PC-9 (cell line): ENCODE measurements at regions of chr3 and their contacts with region 1.

Region 1: GRCh38 chr3:46110701-46111493 is 83.6 kb upstream of the XCR1 start:
- DNase-seq: peak; percentile 72 to 98
- H3K4me3 ChIP-seq: peak overlapping the region; percentile 41; the same call in 1 of the 2 replicates
- H3K27ac ChIP-seq: peak overlapping the region; percentile 98
- H3K4me1 ChIP-seq: peaks cover 76% of the 10 kb centered on the region
- H3K27me3 ChIP-seq: no peaks in the 10 kb centered on the region
- CTCF ChIP-seq: no peak

Region 2: GRCh38 chr3:45841757-45842491 is 269.0 kb before region 1 on chr3 and contains the start of gene LZTFL1:
- CTCF ChIA-PET with region 1: no interaction called
- POLR2A ChIA-PET with region 1: no interaction called
- intact Hi-C with region 1: no loop called
- DNase-seq: peak; percentile 87 to 92
- H3K4me3 ChIP-seq: peak within 1 kb of the TSS; percentile 93
- H3K27ac ChIP-seq: peak within 1 kb of the TSS; percentile 36
- H3K4me1 ChIP-seq: peaks cover 8% of the 10 kb centered on the region; the same call in 1 of the 2 replicates
- H3K27me3 ChIP-seq: no peaks in the 10 kb centered on the region; the same call in 1 of the 2 replicates
- CTCF ChIP-seq: no peak
- total RNA-seq, gene LZTFL1: 21.2 and 39.2 TPM in 2 replicates

Region 3: GRCh38 chr3:46127501-46127900 is 16.6 kb after region 1 on chr3:
- CTCF ChIA-PET with region 1: no interaction called
- POLR2A ChIA-PET with region 1: no interaction called
- intact Hi-C with region 1: loop called (anchors 1 kb)
- DNase-seq: peak; percentile 57 to 88
- H3K4me3 ChIP-seq: no peak overlapping the region
- H3K27ac ChIP-seq: peak overlapping the region; percentile 62
- H3K4me1 ChIP-seq: peaks cover 62% of the 10 kb centered on the region
- H3K27me3 ChIP-seq: no peaks in the 10 kb centered on the region
- CTCF ChIP-seq: no peak